Upper lobe of right lung (tissue), 1 donor: ENCODE measurements at regions of chr7 and their contacts with region 1.

Region 1: DNA sequence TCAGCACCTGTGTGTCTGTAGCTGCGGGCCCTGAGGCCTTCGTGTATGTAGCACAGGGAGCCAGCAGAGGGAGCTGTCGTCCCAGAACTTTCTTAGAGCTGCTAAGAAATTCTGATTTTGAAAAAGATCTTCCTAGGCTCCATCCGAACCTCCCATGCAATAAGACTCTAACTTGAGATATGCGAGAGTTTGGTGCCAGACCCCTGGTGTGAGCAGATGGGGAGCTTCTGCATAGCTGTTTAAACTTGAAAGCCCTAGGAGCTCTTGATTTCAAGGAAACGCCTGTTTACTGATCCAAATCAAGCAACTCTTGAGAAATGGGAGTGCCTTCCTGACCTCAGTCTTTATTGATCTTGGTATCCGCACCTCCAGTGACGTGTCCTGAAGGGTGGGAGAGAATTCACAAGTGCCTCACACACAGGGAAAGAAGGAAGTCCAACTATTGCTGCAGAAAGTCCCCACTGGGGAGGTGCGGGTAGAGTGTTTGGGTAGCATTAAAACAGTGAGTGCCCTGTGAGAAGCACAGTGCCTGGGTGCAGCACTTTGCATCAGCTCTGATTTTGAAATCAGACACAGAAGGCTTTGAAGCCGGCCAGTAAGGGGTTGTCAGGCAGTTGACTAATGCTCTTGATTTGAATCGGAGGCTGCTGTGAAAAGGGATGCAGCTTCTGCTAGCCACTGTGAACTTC is 66.4 kb upstream of the STRIP2 start:
- DNase-seq: peak; percentile 85
- ATAC-seq: peak; percentile 93
- H3K4me3 ChIP-seq: peak overlapping the region; percentile 38
- H3K27ac ChIP-seq: peak overlapping the region; percentile 82
- H3K4me1 ChIP-seq: peaks cover 13% of the 10 kb centered on the region
- H3K27me3 ChIP-seq: no peaks in the 10 kb centered on the region
- CTCF ChIP-seq: peak; percentile 91

Region 2: GRCh38 chr7:129433847-129434674 is 66.2 kb after region 1 on chr7 and contains the start of gene STRIP2:
- intact Hi-C with region 1: no loop called
- DNase-seq: peak; percentile 96
- ATAC-seq: peak; percentile 98
- H3K4me3 ChIP-seq: peak within 1 kb of the TSS; percentile 88
- H3K27ac ChIP-seq: peak within 1 kb of the TSS; percentile 19
- H3K4me1 ChIP-seq: peaks cover 13% of the 10 kb centered on the region
- H3K27me3 ChIP-seq: peaks cover 12% of the 10 kb centered on the region
- CTCF ChIP-seq: no peak
- total RNA-seq, gene STRIP2: 1.3 TPM

Region 3: DNA sequence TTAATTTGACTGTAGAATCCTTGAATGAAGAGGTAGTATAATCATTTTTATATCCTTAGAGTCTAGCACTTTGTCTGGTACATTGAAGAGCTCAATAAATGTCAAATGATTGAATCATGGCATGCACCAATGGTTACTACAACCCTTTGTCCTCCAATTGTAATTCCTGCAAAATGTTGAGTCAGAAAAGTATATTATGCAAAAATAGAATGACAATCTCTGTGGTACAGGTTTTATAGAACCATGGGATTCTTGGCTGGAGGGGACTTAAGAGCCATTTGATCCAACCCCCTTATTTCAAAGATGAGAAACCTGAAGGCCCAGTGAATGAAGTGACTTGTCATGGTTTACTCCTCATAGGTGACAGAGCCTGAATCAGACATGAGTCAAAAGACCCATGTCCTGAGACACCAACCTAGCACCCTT is 103.6 kb after region 1 on chr7:
- intact Hi-C with region 1: loop called (anchors 5 kb)
- DNase-seq: no peak
- ATAC-seq: no peak
- H3K4me3 ChIP-seq: no peak overlapping the region
- H3K27ac ChIP-seq: no peak overlapping the region
- H3K4me1 ChIP-seq: no peaks in the 10 kb centered on the region
- H3K27me3 ChIP-seq: no peaks in the 10 kb centered on the region
- CTCF ChIP-seq: no peak

Region 4: GRCh38 chr7:129591868-129592267 is 224.0 kb after region 1 on chr7:
- intact Hi-C with region 1: no loop called
- DNase-seq: no peak
- ATAC-seq: no peak
- H3K4me3 ChIP-seq: no peak overlapping the region
- H3K27ac ChIP-seq: no peak overlapping the region
- H3K4me1 ChIP-seq: no peaks in the 10 kb centered on the region
- H3K27me3 ChIP-seq: no peaks in the 10 kb centered on the region
- CTCF ChIP-seq: no peak